ENCODE measurements at regions of chr1 and their contacts with region 1.

Region 1: DNA sequence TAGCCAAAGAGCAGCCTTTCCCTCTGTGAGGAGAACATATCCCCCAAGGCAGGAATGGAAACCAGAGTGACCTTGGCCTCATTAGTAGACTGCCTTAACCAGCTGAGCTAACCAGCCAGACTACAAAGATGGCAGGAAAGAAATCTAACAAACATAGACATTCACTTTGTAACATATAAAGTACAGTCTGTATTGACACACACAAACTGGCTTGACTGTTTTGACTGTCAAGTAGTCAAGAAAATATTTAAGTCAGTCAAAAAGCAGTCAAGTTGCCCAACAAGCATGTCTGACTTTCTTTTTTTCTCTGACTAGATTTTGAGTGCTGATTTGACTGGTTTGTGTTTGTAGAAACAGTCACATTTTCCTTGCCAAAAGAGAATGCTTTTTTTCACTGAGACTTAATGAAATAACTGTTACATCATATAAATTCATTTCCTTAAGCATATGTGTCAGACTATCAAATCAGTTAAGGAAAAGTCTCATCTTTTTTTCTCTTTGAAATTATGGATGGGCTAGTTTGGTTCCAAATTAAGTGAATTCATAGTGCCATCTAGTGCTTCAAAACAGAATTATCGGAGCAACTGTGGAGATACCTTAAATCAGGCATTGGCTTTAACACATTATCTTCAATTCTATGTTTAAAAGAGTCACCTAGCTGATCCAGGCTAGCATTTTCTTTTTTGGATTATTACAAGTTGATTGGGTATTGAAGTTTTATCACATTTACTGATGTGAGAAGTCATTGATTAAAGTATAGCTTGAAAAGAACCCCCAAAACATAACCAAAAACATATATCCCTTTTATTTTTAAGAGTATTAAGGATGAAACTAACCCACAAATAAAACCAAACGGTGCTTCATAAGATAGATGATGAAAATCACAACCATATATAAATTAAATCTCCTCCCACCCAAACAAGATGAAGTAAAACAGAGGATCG is 75.0 kb downstream of the ATP6V1G3 start:
- DNase-seq: peak; percentile 66
- H3K4me3 ChIP-seq: no peak overlapping the region
- H3K27ac ChIP-seq: peak overlapping the region; percentile 25
- H3K4me1 ChIP-seq: peaks cover 29% of the 10 kb centered on the region
- H3K27me3 ChIP-seq: no peaks in the 10 kb centered on the region
- CTCF ChIP-seq: peak; percentile 61 to 65

Region 2: DNA sequence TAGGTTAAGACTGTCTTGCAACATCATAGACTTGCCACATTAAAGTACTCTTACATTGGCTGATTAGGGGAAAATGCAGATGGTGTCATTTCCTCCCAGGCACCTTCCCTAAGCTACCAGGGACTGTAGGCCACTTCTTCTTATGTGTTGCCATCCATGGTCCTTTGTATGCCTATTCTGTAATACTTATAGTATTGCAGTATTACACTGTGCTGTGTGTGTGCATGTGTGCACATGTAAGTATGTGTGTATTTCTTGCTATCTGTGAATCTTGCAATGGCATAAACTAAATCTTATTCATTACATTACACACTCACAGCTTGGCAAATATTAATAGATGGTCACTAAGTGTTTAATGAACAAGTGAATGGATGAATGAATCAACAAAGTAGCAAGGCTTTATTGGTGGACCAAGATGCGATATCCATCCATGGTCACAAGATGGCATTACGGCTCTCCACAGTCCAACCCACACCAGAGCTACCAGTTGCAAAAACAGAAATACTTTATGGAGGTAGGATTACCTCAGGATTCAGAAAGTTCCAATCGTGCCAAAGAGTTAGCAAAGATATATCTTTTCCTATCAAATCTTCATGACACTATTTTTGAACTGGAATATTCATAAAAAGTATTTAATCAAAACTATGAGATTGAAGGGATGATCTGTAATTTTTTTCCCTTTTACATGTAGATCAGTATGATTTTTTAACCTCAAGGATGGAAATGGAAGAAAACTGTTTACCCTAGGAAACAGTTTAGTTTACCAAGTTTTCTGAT is 850.4 kb before region 1 on chr1:
- CTCF ChIA-PET with region 1: no interaction called
- dilution Hi-C with region 1: no loop called
- in situ Hi-C with region 1: no loop called
- intact Hi-C with region 1: loop called (anchors 5 kb)
- DNase-seq: peak; percentile 19
- H3K4me3 ChIP-seq: no peak overlapping the region
- H3K27ac ChIP-seq: no peak overlapping the region
- H3K4me1 ChIP-seq: no peaks in the 10 kb centered on the region
- H3K27me3 ChIP-seq: no peaks in the 10 kb centered on the region
- CTCF ChIP-seq: peak; percentile 50 to 70

Region 3: GRCh38 chr1:197868751-197869489 is 596.6 kb before region 1 on chr1:
- CTCF ChIA-PET with region 1: interaction called, 3 read pairs
- dilution Hi-C with region 1: no loop called
- in situ Hi-C with region 1: no loop called
- intact Hi-C with region 1: loop called (anchors 1 kb)
- DNase-seq: peak; percentile 58
- H3K4me3 ChIP-seq: no peak overlapping the region
- H3K27ac ChIP-seq: no peak overlapping the region
- H3K4me1 ChIP-seq: no peaks in the 10 kb centered on the region
- H3K27me3 ChIP-seq: no peaks in the 10 kb centered on the region
- CTCF ChIP-seq: peak; percentile 66 to 85

Region 4: DNA sequence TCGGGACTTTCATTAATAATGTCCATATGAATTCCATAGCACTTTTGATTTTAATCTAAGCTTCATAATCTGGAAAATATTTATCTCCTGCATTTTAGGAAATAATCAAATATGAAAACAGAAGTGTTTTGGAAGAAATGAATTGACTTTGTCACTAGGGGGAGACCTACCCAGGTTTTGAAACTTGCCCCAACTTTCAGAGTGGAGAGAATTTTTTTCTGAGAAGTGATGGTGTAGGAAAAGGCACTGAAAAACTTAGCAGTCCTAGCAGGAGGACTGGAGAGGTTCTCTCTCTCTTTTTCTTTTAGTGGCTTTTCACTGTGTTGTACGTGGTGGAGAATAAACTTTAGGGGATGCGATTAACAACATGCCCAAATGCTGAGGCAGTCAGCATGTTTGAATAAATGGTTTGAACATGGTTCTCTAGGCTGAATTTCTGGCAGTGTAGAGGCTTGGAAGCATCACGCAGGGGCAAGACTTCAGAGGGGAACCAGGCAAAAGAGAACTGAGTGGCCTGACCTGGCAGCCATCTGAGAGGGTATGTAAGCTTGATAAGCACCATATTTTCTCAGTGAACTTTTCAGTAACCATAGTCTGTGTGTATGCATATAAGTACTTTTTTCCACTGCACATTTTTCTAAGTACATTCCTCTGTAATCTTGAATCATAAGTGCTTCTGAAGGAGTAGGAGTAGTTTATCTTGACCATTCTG is 377.0 kb before region 1 on chr1:
- CTCF ChIA-PET with region 1: no interaction called
- dilution Hi-C with region 1: no loop called
- in situ Hi-C with region 1: loop called (anchors 25 kb)
- intact Hi-C with region 1: loop called (anchors 1 kb)
- DNase-seq: peak; percentile 45
- H3K4me3 ChIP-seq: no peak overlapping the region
- H3K27ac ChIP-seq: no peak overlapping the region
- H3K4me1 ChIP-seq: no peaks in the 10 kb centered on the region
- H3K27me3 ChIP-seq: no peaks in the 10 kb centered on the region
- CTCF ChIP-seq: peak; percentile 56 to 66

Region 5: DNA sequence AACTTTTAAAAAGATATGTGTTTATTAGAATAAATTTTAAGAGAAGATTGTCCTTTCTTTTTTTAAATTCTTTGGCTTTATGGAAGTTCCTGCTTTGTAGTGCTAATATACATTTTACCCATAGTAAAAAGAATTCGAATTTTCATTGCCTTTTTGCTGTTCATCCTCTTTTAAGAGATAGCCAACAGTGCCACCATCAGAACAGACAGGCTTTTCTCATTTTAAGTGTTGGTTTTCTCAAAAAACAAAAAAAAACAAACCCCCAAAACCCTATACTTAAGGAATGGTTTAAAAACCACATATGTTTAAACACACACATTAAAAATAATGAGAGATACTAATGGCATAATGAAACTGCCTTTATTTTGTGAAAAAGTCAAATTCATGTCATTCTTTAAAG is 189.9 kb before region 1 on chr1:
- CTCF ChIA-PET with region 1: no interaction called
- dilution Hi-C with region 1: no loop called
- in situ Hi-C with region 1: no loop called
- intact Hi-C with region 1: loop called (anchors 5 kb)
- DNase-seq: no peak
- H3K4me3 ChIP-seq: no peak overlapping the region
- H3K27ac ChIP-seq: no peak overlapping the region
- H3K4me1 ChIP-seq: no peaks in the 10 kb centered on the region
- H3K27me3 ChIP-seq: no peaks in the 10 kb centered on the region
- CTCF ChIP-seq: no peak

Measured in mammary epithelial cell (primary cell).